ENCODE measurements at regions of chr1 and their contacts with region 1.

Region 1: DNA sequence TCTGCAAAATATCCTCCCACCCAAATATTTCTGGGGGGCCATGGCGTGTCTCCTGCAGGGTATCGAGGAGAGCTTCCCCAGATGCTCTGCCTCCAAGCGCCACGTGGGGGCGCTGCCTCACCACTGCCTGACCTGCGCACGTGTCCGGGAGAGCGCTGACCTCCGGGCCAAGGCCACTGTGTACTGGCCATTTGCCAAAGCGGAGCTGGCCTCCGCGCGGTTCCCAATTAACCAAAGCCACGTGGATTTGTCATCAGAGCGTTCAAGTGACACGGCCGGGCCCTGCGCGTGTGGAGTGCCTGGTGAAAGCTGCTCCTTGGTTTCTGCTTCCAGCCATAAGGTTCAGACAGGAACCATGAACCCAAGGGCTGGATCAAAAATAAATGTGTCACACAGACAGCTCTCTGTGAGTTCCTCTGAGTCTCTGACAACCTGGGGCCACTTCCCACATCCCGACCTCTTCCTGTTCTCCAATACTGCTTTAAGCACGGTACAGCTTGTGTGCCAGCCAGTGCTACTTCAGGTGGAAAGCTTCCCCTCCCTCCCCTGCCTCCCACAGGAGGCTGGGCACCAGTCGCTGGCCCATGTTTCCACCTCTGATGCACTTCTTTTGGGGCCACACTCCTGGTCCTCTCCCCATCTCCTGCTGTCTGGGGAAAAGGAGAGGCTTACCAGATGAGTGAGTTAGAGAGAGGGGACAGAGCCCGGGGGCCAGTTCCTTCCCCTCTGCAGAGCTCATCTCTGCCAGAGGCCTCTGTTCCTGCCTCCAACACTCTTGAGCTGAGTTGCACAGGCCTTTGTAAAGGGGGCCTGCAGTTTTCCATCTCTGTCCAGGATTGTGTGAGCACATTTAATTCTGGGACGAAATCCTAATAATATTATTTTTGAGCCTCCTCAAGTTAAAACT is 26.1 kb downstream of the ZP4 start:
- DNase-seq: peak; percentile 77
- H3K4me3 Mint-ChIP-seq: peak overlapping the region; percentile 66
- H3K27ac Mint-ChIP-seq: peak overlapping the region; percentile 16
- H3K4me1 Mint-ChIP-seq: peaks cover 9% of the 10 kb centered on the region
- H3K27me3 Mint-ChIP-seq: no peaks in the 10 kb centered on the region
- CTCF ChIP-seq: peak; percentile 100

Region 2: GRCh38 chr1:237732657-237733056 is 131.9 kb before region 1 on chr1:
- CTCF ChIA-PET with region 1: no interaction called
- POLR2A ChIA-PET with region 1: no interaction called
- intact Hi-C with region 1: no loop called
- DNase-seq: no peak
- H3K4me3 Mint-ChIP-seq: no peak overlapping the region
- H3K27ac Mint-ChIP-seq: no peak overlapping the region
- H3K4me1 Mint-ChIP-seq: peaks cover 6% of the 10 kb centered on the region
- H3K27me3 Mint-ChIP-seq: no peaks in the 10 kb centered on the region
- CTCF ChIP-seq: no peak

Region 3: GRCh38 chr1:237891979-237892378 is 27.4 kb after region 1 on chr1:
- CTCF ChIA-PET with region 1: interaction called, 31 read pairs
- POLR2A ChIA-PET with region 1: no interaction called
- intact Hi-C with region 1: no loop called
- DNase-seq: no peak
- H3K4me3 Mint-ChIP-seq: no peak overlapping the region
- H3K27ac Mint-ChIP-seq: peak overlapping the region; percentile 49
- H3K4me1 Mint-ChIP-seq: peaks cover 8% of the 10 kb centered on the region
- H3K27me3 Mint-ChIP-seq: no peaks in the 10 kb centered on the region
- CTCF ChIP-seq: no peak

Region 4: DNA sequence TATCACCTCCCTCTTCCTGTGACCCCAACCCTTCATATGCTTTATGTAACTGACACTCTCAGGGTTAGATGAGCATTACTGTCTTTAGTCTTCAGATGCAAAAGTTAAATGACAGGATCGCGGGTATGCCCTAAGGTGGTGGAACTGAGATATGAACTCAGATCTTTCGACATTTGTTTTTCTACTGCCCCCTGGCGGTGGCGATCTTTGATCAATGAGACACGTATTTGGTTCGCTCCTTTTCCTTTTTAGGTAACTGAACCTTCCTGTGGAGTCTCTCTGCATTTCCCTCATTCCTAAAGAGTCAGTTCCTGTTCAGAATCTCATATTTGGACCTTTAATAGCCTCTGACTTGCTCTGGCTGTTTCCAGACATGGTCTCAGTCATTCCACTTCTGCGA is 74.0 kb after region 1 on chr1:
- CTCF ChIA-PET with region 1: interaction called, 7 read pairs
- POLR2A ChIA-PET with region 1: no interaction called
- intact Hi-C with region 1: loop called (anchors 2 kb)
- DNase-seq: peak; percentile 61
- H3K4me3 Mint-ChIP-seq: no peak overlapping the region
- H3K27ac Mint-ChIP-seq: no peak overlapping the region
- H3K4me1 Mint-ChIP-seq: no peaks in the 10 kb centered on the region
- H3K27me3 Mint-ChIP-seq: no peaks in the 10 kb centered on the region
- CTCF ChIP-seq: no peak

Region 5: GRCh38 chr1:238088560-238089290 is 224.1 kb after region 1 on chr1:
- CTCF ChIA-PET with region 1: interaction called, 12 read pairs
- POLR2A ChIA-PET with region 1: interaction called, 3 read pairs
- intact Hi-C with region 1: no loop called
- DNase-seq: no peak
- H3K4me3 Mint-ChIP-seq: no peak overlapping the region
- H3K27ac Mint-ChIP-seq: no peak overlapping the region
- H3K4me1 Mint-ChIP-seq: no peaks in the 10 kb centered on the region
- H3K27me3 Mint-ChIP-seq: no peaks in the 10 kb centered on the region
- CTCF ChIP-seq: no peak

Region 6: DNA sequence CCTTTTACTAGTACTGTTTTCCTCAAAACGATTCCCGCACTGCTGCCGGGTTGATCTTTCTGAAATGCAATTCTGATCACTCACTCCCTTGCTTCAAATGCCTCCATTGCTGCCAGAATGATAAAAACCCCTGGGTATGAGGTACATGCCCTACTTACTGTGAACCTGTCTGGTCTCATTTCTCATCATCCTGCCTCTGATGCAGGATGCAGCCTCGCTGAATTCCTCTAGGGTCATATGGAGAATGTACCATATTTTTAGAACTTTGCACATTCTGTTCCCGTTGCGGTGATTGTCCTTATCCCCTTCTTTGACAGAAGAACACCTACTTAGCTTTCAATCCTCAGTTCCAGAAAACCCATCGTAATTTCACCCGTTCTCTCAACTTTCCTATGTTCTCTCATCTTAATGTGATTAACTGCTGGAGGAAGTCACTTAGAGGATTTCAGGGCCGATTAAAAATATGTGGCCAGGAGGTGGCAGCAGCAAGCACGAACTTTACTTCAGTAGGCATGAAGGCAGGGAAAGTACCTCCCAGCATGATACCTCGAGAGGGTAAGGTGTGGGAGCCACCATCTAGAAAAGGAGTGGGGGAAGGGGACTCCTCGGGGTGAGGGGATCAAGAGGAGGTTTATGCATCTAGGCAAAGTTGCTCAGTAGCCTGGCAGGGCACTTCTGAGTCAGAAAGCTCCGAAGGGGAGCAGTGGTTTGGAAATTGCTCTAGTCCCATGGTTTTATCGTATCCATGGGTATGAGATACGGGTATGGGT is 387.6 kb after region 1 on chr1:
- CTCF ChIA-PET with region 1: interaction called, 116 read pairs
- POLR2A ChIA-PET with region 1: no interaction called
- intact Hi-C with region 1: loop called (anchors 1 kb)
- DNase-seq: peak; percentile 84
- H3K4me3 Mint-ChIP-seq: no peak overlapping the region
- H3K27ac Mint-ChIP-seq: no peak overlapping the region
- H3K4me1 Mint-ChIP-seq: peaks cover 7% of the 10 kb centered on the region
- H3K27me3 Mint-ChIP-seq: no peaks in the 10 kb centered on the region
- CTCF ChIP-seq: peak; percentile 87

Region 7: DNA sequence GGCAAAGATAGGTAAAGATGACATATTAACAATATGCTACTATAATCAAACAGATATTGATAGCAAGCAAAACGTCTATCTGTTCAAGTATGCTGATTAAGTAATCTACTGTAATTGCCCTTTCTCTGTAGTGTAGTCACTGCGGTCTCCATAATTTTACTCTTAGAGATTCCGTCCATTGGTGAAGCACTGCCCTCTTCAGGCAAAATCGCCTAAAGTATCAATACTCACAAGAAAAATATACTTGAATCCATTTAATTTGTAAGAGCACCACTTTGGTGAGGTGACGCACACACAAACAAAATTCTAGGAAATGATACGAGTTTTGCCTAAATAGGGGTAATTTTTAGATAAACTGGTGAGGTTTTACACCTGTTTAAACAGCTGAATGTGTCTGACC is 1087.2 kb after region 1 on chr1:
- CTCF ChIA-PET with region 1: interaction called, 167 read pairs
- POLR2A ChIA-PET with region 1: interaction called, 6 read pairs
- intact Hi-C with region 1: loop called (anchors 1 kb)
- DNase-seq: peak; percentile 82
- H3K4me3 Mint-ChIP-seq: no peak overlapping the region
- H3K27ac Mint-ChIP-seq: no peak overlapping the region
- H3K4me1 Mint-ChIP-seq: peaks cover 12% of the 10 kb centered on the region
- H3K27me3 Mint-ChIP-seq: no peaks in the 10 kb centered on the region
- CTCF ChIP-seq: peak; percentile 89